Gastrocnemius medialis (tissue), 4 donors: ENCODE measurements at regions of chr3 and their contacts with region 1.

Region 1: DNA sequence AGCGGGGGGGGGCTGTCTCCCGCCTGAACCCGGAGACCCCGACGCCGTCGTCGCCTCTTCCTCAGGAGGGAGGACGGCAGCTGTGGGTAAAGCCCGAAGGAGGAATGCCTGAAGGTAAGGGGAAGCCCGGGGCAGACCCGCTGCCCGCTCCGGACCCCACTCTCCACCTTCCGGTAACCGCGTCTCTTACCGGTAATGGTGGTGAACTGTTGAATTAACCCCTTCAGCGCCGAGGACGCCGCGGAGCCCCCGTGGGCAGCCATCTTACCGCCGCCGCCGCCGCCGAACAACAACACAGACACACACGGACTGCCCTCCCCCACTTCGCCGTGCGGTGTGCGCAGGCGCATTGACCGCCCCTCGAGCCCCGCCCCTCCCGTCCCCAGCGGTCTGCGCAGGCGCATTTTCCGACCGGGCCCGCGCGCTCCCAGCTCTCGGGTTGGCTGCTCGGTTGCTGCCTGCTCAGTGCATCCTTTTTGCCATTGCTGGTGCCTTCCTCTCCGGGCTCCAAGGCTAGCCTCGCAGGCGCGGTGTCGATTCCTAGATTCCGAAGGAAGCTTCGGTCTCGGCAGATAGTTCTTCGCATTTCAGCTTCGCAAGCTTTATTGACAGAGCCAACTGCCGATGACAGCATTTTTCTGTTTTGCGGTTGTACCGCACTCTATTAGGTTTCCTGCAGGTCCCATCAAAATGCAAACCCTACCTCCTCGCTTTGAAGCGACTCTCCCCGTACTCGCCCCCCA is at the start of gene UBXN7:
- DNase-seq: peak; percentile 91 to 93
- ATAC-seq: peak; percentile 93 to 94
- H3K4me3 ChIP-seq: peak within 1 kb of the TSS; percentile 72 to 99 (median 96)
- H3K27ac ChIP-seq: peak within 1 kb of the TSS; percentile 93 to 99 (median 96)
- H3K4me1 ChIP-seq: peaks cover 11 to 14% of the 10 kb centered on the region in 2 donors
- H3K27me3 ChIP-seq: no peaks in the 10 kb centered on the region
- CTCF ChIP-seq: no peak
- POLR2A ChIP-seq: peak; percentile 81 to 89
- total RNA-seq, gene UBXN7: 4.2 to 8.0 (median 5.4) TPM

Region 2: GRCh38 chr3:196251918-196252317 is 180.4 kb before region 1 on chr3:
- in situ Hi-C with region 1: no loop called
- intact Hi-C with region 1: loop called (anchors 5 kb)
- DNase-seq: no peak
- ATAC-seq: no peak
- H3K4me3 ChIP-seq: no peak overlapping the region
- H3K27ac ChIP-seq: no peak overlapping the region
- H3K4me1 ChIP-seq: peaks cover 3 to 5% of the 10 kb centered on the region in 2 donors
- H3K27me3 ChIP-seq: no peaks in the 10 kb centered on the region
- CTCF ChIP-seq: no peak
- POLR2A ChIP-seq: no peak

Region 3: DNA sequence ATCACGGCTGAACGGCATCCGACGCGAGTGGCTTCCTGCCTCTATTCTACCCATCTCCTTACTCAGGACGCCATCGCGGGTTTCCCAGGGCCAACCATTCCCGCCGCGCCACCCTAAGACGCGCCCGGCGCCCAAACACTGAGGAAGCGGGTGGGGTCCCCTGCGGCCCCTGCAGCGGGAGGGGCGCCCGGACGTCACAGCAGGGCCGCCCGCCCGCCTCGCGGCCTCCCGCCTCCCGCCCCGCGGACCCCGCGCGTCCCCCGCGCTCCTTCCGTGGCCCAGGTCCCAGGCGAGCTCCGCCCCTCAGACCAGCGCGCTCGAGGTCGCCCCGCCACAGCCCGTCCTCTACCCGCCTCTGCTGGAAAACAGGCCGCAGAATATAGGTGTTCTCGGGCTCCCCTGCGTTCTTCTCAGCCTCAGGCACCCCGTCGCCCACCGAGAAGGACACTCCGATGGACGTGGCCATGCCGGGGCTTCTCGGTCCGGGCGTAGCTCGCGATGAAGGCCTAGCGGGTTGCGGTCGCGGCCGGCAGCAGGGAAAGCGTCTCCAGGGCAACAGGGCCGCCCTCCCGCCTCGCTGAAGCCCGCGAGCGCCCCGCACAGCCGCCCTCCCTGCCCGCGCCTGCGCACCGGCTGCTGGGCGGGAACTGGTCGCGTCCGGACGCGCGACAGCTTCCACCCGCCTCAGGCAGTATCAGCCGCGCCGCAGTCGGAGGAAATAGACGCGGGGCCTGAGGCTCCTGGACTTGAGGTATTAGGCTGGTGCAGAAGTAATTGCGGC is 114.4 kb before region 1 on chr3 and contains the start of gene DYNLT2B:
- in situ Hi-C with region 1: no loop called
- intact Hi-C with region 1: loop called (anchors 5 kb)
- DNase-seq: peak; percentile 65 to 80
- ATAC-seq: peak; percentile 93 to 95
- H3K4me3 ChIP-seq: peak within 1 kb of the TSS; percentile 79 to 96 (median 86)
- H3K27ac ChIP-seq: peak within 1 kb of the TSS; percentile 83 to 91 (median 86)
- H3K4me1 ChIP-seq: peaks cover 0 to 5% of the 10 kb centered on the region in 2 donors
- H3K27me3 ChIP-seq: no peaks in the 10 kb centered on the region
- CTCF ChIP-seq: no peak
- POLR2A ChIP-seq: peak; percentile 48 to 56
- total RNA-seq, gene DYNLT2B: 2.3 to 3.3 TPM in 2 of 4 donors, not detected in the others

Region 4: DNA sequence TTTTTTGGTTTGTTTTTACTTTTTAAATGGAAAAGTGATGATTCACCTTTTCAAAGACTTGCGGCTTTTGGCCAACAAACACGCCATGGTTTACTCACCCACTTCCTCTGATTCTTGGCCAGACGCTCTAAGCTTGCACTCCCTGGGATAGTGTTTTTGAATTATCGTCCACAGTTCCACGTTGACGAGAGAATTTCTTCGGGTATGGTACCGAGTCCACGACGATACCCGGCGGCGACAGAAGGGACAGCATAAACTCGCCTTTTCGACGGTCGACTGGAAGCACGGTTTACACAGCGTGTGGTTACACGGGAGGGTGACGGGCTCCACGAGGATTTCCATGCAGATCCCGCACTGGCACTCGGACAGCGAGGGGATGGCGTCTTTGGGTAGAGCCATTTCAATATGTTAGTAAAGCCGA is 70.5 kb after region 1 on chr3:
- in situ Hi-C with region 1: no loop called
- intact Hi-C with region 1: loop called (anchors 1 kb)
- DNase-seq: peak; percentile 18 to 50
- ATAC-seq: peak; percentile 46 to 49
- H3K4me3 ChIP-seq: peak overlapping the region; percentile 87 to 92 (median 88)
- H3K27ac ChIP-seq: peak overlapping the region; percentile 91 to 95 (median 93)
- H3K4me1 ChIP-seq: peaks cover 18 to 22% of the 10 kb centered on the region in 2 donors
- H3K27me3 ChIP-seq: no peaks in the 10 kb centered on the region
- CTCF ChIP-seq: no peak
- POLR2A ChIP-seq: no peak

Region 5: DNA sequence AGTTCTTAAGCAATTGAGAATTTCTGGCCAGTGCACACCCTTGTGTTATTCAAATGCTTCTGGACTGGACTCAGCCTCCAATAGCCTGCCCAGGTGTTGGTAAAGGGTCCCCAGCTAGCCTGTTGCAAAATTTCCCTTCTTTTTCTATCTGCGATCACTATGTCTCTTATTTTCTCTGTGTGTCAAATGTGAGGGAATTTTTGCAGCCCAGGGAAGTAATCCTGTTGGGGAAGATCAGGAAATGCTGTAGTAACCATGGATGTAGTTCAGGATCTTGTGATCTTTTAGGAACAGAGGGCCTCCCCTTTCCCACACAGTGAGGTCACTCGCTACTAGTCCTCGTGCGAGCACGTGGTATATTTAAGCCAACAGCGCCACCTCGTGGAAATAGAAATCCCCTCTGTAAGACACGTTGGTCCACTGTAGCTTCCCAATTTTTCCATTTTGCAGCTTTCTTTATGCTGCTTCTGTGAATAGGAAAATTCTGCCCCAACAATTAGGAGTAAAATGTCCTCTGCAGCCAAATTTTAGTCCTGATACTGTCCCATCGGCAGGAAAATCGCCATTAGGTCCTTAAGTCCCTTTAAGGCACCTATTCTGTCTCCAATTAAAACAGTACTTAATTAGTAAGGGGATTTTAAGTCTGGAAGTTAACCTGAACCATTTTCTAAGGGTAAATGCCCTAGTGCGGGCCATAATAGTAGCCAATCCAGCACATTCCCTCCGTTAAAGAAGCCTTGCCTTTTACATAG is 86.8 kb after region 1 on chr3:
- in situ Hi-C with region 1: no loop called
- intact Hi-C with region 1: loop called (anchors 5 kb)
- DNase-seq: peak; percentile 56 to 71
- ATAC-seq: peak; percentile 60 to 66
- H3K4me3 ChIP-seq: no peak overlapping the region
- H3K27ac ChIP-seq: peak overlapping the region; percentile 7 to 50 (median 25)
- H3K4me1 ChIP-seq: peaks cover 19 to 23% of the 10 kb centered on the region in 2 donors
- H3K27me3 ChIP-seq: no peaks in the 10 kb centered on the region
- CTCF ChIP-seq: peak; percentile 69 to 82 (median 77)
- POLR2A ChIP-seq: no peak

Region 6: DNA sequence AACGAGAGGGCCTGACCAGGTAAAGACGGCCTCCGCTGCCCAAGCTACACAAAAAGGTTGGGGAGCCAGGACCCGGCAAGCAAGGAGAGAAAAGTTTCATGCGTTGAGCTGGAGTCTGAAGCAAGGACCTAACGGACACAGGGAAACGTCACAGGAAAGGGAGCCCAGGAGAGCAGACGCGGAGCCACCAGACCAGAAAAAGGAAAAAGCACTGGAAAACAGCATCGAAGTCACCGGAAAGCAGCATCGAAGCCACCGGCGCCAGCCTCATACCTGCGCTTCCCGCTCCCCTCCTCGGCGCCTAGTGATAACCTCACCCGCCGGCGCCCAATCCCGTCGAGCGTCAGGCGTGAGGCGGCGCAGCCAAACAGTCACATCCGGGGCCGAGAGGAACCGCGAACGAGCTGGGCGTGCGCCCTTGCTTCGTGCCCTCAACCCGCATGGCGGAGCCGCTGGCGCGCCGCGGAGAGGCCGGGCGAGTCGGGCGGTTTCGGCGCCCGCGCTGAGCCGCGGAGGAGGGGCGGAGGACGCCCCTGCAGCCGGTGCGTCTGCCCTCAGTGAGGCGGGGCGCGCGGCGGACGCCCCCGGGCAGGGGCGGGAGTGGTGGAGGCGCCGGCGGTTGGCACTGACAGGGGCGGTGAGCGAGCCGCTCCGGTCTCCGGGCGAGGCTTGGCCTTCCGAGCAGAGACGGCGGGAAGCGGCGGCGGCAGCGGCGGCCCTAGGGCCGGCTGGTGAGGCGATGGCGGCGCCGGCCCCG is 136.1 kb after region 1 on chr3 and contains the starts of genes FBXO45 and WDR53:
- in situ Hi-C with region 1: no loop called
- intact Hi-C with region 1: loop called (anchors 1 kb)
- DNase-seq: peak; percentile 90 to 91
- ATAC-seq: peak; percentile 95 to 96
- H3K4me3 ChIP-seq: peak within 1 kb of the TSS; percentile 82 to 98 (median 88)
- H3K27ac ChIP-seq: peak within 1 kb of the TSS; percentile 81 to 92 (median 89)
- H3K4me1 ChIP-seq: peaks cover 19 to 23% of the 10 kb centered on the region in 2 donors
- H3K27me3 ChIP-seq: no peaks in the 10 kb centered on the region
- CTCF ChIP-seq: peak in 1 of 5 experiments; percentile 11
- POLR2A ChIP-seq: peak; percentile 75 to 88
- total RNA-seq, gene FBXO45: 9.6 to 20.8 (median 12.1) TPM
- total RNA-seq, gene WDR53: 4.8 to 8.3 (median 6.7) TPM